Activated CD4-positive, alpha-beta T cell treated with anti-CD3 and anti-CD28 coated beads for 36 hours (primary cell): ENCODE measurements at regions of chr14 and their contacts with region 1.

Region 1: DNA sequence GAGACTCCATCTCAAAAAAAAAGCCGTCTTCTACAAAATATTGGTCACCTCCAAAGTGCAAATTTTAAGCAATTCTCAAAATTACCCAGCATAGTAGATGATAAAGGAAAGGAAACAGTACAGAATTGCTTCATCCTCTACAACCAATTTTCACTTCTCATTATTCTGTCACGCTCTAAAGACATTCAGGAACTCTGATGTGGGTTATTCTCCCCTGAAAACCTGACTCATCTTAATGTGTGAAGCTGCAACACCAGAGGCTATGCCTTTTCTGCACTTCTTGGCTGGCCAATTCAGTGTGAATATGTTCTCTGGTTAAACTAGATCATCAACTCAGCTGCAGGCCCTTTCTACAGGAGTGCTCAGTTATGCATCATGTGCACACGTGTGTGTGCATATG is 11.0 kb downstream of the PTGER2 start:
- DNase-seq: peak; percentile 45
- ATAC-seq: peak; percentile 87
- H3K4me3 Mint-ChIP-seq: no peak overlapping the region
- H3K27ac Mint-ChIP-seq: no peak overlapping the region
- H3K4me1 Mint-ChIP-seq: peaks cover 43% of the 10 kb centered on the region
- H3K27me3 Mint-ChIP-seq: peaks cover 8% of the 10 kb centered on the region

Region 2: DNA sequence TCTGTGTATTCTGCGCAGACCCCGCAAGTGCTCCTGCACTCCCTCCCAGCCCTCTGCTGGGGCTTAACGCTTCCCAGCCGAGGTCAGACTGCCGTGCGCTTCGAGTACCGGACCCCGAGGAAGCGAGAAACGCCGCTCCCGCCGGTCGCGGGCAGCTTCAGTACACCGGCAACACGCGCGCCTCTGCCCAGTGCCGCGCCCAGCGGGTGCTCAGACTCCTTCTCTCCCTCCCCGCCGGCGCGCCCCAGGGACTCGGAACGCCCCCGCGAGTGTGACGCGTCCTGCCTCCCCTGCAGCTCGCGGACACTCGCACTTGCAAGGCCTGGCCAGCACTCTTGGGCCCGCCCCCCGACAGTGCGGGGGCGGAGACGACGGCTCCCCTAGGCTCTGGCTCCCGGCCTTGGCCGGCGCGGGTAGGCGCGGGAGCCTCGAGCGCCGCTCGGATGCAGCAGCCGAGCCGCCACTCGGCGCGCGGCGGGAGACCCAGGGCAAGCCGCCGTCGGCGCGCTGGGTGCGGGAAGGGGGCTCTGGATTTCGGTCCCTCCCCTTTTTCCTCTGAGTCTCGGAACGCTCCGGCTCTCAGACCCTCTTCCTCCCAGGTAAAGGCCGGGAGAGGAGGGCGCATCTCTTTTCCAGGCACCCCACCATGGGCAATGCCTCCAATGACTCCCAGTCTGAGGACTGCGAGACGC is 11.1 kb before region 1 on chr14 and contains the start of gene PTGER2:
- CTCF ChIA-PET with region 1: interaction called, 7 read pairs
- POLR2A ChIA-PET with region 1: no interaction called
- intact Hi-C with region 1: loop called in 1 of 2 experiments (anchors 1 kb)
- DNase-seq: peak; percentile 83
- ATAC-seq: peak; percentile 62
- H3K4me3 Mint-ChIP-seq: peak within 1 kb of the TSS; percentile 87
- H3K27ac Mint-ChIP-seq: peak within 1 kb of the TSS; percentile 80
- H3K4me1 Mint-ChIP-seq: peaks cover 50% of the 10 kb centered on the region
- H3K27me3 Mint-ChIP-seq: peaks cover 53% of the 10 kb centered on the region
- total RNA-seq, gene PTGER2: 2.4 TPM

Region 3: GRCh38 chr14:52455291-52456088 is 130.4 kb after region 1 on chr14:
- CTCF ChIA-PET with region 1: interaction called, 4 read pairs
- POLR2A ChIA-PET with region 1: no interaction called
- intact Hi-C with region 1: loop called (anchors 5 kb)
- DNase-seq: no peak
- ATAC-seq: peak; percentile 57
- H3K4me3 Mint-ChIP-seq: no peak overlapping the region
- H3K27ac Mint-ChIP-seq: no peak overlapping the region
- H3K4me1 Mint-ChIP-seq: peaks cover 8% of the 10 kb centered on the region
- H3K27me3 Mint-ChIP-seq: no peaks in the 10 kb centered on the region

Region 4: GRCh38 chr14:52602131-52602530 is 277.0 kb after region 1 on chr14:
- CTCF ChIA-PET with region 1: no interaction called
- POLR2A ChIA-PET with region 1: no interaction called
- intact Hi-C with region 1: no loop called
- DNase-seq: no peak
- ATAC-seq: no peak
- H3K4me3 Mint-ChIP-seq: no peak overlapping the region
- H3K27ac Mint-ChIP-seq: no peak overlapping the region
- H3K4me1 Mint-ChIP-seq: peaks cover 3% of the 10 kb centered on the region
- H3K27me3 Mint-ChIP-seq: peaks cover 2% of the 10 kb centered on the region